Head of caudate nucleus (tissue), 42 donors: ENCODE measurements at regions of chr3 and their contacts with region 1.

Region 1: GRCh38 chr3:51498876-51499738 is 708 bp downstream of the DCAF1 start:
- DNase-seq: peak; percentile 72 to 96 (median 88)

Region 2: GRCh38 chr3:51163051-51163450 is 336.1 kb before region 1 on chr3:
- intact Hi-C with region 1: no loop called
- DNase-seq: no peak

Region 3: DNA sequence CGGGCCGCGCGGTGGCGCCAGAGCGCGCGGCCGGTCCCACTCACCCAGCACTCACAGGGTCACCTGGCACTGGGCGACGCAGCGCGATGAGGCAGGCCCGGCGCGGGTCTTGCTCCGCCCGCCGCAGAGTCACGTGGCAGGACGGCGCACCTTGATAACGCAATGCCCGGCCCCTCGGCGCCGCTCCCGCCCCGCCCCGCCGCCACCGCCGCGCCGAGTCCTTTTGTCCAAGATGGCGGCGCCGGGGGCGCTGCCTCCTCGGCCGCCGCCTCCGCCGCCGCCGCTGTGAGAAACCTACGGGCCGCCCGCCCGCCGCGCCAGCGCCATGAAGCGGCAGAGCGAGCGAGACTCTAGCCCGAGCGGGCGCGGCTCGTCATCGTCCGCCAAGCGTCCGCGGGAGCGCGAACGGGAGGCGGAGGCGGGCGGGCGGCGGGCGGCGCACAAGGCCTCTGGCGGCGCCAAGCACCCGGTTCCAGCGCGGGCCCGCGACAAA is 108.0 kb before region 1 on chr3 and contains the start of gene RBM15B:
- intact Hi-C with region 1: loop called (anchors 5 kb)
- DNase-seq: peak; percentile 93 to 99 (median 98)

Region 4: GRCh38 chr3:51538459-51539290 is 39.6 kb after region 1 on chr3 and contains the start of gene RAD54L2:
- intact Hi-C with region 1: loop called (anchors 1 kb)
- DNase-seq: peak; percentile 49 to 94 (median 88)

Region 5: DNA sequence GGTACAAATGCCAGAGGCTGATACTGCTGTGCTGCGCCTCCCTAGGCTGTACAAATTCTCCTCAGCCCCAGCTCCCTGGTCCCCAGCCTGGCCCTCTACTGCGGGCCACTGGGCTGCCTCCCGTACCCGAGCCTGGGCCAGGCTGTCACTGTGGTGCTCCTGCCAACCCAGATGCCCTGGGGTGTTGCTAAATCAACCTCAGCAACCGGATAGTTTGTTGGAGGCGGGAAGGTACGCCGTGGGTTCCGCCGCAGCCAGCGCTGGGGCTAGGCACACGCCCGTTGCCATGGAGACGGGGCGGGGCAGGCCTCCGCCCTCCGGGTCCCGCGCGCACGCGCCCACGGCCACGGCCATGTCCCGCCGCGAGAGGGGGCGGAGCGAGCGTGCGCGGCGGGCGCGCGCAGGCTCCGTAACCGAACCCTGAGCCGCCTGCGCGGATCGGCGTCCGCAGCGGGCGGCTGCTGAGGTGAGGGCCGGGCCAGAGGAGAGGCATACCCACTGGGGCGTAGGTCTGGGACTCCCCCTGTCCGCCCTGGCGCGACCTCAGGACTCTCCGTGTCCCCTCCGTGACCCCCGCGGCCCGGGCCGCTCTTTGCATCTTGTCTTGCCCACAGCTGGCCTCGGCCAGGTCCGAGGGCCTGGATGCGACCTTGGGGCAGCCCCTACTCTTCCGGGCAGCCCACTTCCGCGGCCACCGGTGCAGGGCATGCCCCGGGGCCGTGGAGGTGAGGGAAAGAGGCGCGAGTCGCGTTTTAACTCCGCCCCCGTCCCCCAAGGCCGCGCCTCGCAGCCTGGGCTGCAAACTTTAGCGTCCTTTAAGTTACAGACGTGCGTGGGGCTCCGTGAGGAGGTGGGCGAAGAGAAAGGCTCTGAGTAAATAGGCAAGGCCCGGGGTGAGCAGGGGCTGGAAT is 172.0 kb after region 1 on chr3 and contains the start of gene TEX264:
- intact Hi-C with region 1: loop called (anchors 2 kb)
- DNase-seq: peak; percentile 63 to 95 (median 91)

Region 6: GRCh38 chr3:51706788-51707731 is 208.0 kb after region 1 on chr3 and contains the start of gene GRM2:
- intact Hi-C with region 1: no loop called
- DNase-seq: peak in 41 of 42 donors; percentile 10 to 83 (median 58)

Region 7: DNA sequence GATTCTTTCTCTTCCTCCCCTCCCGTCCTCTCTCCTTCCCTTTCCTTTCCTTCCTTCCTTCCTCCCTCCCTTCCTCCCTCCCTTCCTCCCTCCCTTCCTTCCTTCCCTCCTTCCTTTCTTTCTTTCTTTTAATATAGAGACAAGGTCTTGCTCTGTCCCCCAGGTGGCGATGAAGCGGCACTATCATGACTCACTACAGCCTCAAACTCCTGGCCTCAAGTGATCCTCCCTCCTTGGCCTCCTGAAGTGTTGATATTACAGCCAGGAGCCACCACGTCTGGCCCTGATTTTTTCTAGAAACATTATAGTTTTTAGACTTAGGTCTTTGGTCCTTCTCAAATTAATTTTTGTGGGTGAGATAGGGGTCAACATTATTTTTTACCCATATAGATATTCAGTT is 223.3 kb after region 1 on chr3:
- intact Hi-C with region 1: no loop called
- DNase-seq: no peak

Region 8: DNA sequence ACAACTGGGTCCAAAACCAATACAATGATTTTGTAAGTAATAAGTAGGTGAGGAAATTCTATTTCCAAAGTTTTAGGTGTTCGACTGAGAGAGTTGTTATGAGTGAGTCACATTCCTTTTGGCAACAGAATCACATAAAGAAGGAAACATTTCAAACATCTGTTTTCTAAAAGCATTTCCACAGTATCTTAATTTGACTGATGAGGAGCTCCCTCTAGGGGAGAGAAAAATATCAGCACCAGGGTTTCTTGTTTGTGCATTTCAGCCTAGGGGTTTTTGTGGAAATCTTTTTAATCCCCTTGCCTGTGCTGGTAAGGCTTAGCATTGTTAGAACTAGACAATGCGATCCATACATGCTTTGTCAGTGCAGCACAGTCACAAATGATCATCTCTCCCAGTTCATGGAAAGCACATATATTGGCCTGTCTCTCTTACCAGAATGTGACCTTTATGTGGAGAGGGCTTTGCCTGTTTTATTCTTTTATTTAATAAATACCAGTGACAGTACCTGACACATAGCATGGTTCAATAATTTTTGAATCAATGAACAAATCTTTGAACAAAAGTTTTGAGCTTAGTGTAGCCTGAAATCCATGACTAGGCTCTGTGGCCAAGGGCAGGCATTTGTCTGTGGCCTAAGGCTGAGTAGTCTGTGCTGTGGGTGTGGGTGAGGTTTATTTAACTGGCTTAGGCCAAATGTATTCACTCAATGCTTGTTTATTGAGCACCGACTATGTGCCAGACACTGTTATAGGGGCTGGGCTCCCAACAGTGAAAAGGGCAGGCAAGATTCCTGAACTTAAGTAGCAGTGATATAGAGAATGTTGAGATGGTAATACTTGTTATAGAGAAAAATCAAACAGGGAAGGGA is 301.0 kb after region 1 on chr3:
- intact Hi-C with region 1: loop called (anchors 10 kb)
- DNase-seq: peak in 11 of 42 donors; percentile 11 to 63 (median 32)